IMR-90 (cell line): ENCODE measurements at regions of chr4 and their contacts with region 1.

Region 1: GRCh38 chr4:124712372-124713184 is at the start of gene ANKRD50:
- DNase-seq: peak; percentile 94
- ATAC-seq: peak; percentile 78
- H3K4me3 ChIP-seq: peak within 1 kb of the TSS; percentile 87
- H3K27ac ChIP-seq: peak within 1 kb of the TSS; percentile 90
- H3K4me1 ChIP-seq: peaks cover 4% of the 10 kb centered on the region
- H3K27me3 ChIP-seq: no peaks in the 10 kb centered on the region
- CTCF ChIP-seq: no peak
- POLR2A ChIP-seq: peak; percentile 97
- RAD21 ChIP-seq: 0 out of 2 replicates have a peak, but pooled peaks have one; percentile 7
- total RNA-seq, gene ANKRD50: 35.3 and 45.8 TPM in 2 replicates

Region 2: DNA sequence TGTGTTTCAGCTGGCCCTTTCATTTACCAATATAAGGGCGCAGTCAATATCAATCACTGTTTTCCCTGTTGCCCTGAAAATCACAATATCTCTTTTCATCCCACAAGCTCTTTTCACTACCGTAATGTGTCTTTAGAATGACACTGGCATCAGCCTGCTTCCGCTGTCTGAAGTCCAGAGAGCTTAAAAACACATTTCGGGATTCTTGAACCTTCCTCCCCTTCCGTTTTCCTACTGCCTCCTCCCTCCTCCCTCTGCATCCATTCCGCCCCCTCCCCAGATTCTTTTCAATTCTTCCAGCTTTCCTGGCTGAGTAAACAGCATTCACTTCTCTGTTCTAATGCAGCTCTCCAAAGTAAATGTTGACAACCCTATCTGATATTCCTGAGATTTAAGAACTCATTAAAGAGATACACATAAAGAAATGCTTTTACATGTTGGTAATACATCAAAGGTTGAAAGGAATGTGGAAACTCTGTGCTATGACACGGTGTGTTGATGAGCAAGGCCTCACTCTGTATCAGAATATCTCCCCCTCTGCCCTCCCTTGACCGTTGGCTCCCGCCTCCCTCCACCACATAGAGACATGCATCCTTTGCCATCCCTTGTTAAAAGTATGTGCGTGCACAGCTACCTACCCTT is 1399.5 kb before region 1 on chr4:
- CTCF ChIA-PET with region 1: no interaction called
- POLR2A ChIA-PET with region 1: no interaction called
- dilution Hi-C with region 1: no loop called
- in situ Hi-C with region 1: no loop called
- intact Hi-C with region 1: no loop called
- DNase-seq: no peak
- ATAC-seq: no peak
- H3K4me3 ChIP-seq: no peak overlapping the region
- H3K27ac ChIP-seq: no peak overlapping the region
- H3K4me1 ChIP-seq: no peaks in the 10 kb centered on the region
- H3K27me3 ChIP-seq: no peaks in the 10 kb centered on the region
- CTCF ChIP-seq: no peak
- POLR2A ChIP-seq: no peak
- RAD21 ChIP-seq: no peak

Region 3: GRCh38 chr4:124253080-124253479 is 459.5 kb before region 1 on chr4:
- CTCF ChIA-PET with region 1: no interaction called
- POLR2A ChIA-PET with region 1: no interaction called
- dilution Hi-C with region 1: no loop called
- in situ Hi-C with region 1: no loop called
- intact Hi-C with region 1: no loop called
- DNase-seq: no peak
- ATAC-seq: no peak
- H3K4me3 ChIP-seq: no peak overlapping the region
- H3K27ac ChIP-seq: no peak overlapping the region
- H3K4me1 ChIP-seq: no peaks in the 10 kb centered on the region
- H3K27me3 ChIP-seq: no peaks in the 10 kb centered on the region
- CTCF ChIP-seq: no peak
- POLR2A ChIP-seq: no peak
- RAD21 ChIP-seq: no peak

Region 4: GRCh38 chr4:124745985-124746801 is 33.6 kb after region 1 on chr4:
- CTCF ChIA-PET with region 1: no interaction called
- POLR2A ChIA-PET with region 1: no interaction called
- dilution Hi-C with region 1: no loop called
- in situ Hi-C with region 1: no loop called
- intact Hi-C with region 1: no loop called
- DNase-seq: peak; percentile 4
- ATAC-seq: no peak
- H3K4me3 ChIP-seq: no peak overlapping the region
- H3K27ac ChIP-seq: no peak overlapping the region
- H3K4me1 ChIP-seq: no peaks in the 10 kb centered on the region
- H3K27me3 ChIP-seq: no peaks in the 10 kb centered on the region
- CTCF ChIP-seq: no peak
- POLR2A ChIP-seq: no peak
- RAD21 ChIP-seq: no peak

Region 5: GRCh38 chr4:124940387-124940786 is 227.8 kb after region 1 on chr4:
- CTCF ChIA-PET with region 1: no interaction called
- POLR2A ChIA-PET with region 1: no interaction called
- dilution Hi-C with region 1: no loop called
- in situ Hi-C with region 1: no loop called
- intact Hi-C with region 1: loop called (anchors 5 kb)
- DNase-seq: peak; percentile 98
- ATAC-seq: peak; percentile 68
- H3K4me3 ChIP-seq: no peak overlapping the region
- H3K27ac ChIP-seq: no peak overlapping the region
- H3K4me1 ChIP-seq: peaks cover 3% of the 10 kb centered on the region
- H3K27me3 ChIP-seq: no peaks in the 10 kb centered on the region
- CTCF ChIP-seq: no peak
- POLR2A ChIP-seq: no peak
- RAD21 ChIP-seq: no peak

Region 6: DNA sequence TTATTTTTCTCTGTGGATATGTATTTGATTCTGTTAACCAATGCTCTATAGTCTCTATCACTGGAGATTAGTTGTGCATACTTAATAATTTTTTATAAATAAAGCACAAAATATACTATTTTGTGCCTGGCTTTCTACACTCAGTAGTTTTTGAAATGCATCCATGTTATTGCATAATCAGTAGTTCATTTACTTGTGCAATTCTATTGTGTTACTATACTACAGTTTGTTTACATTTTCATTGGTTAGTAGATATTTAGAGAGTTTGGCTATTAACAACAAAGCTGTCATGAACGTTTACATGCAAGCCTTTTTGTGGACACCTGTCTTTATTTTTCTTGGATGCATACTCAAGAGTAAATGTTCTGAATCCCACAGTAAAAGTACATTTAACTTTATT is 337.1 kb after region 1 on chr4:
- CTCF ChIA-PET with region 1: no interaction called
- POLR2A ChIA-PET with region 1: no interaction called
- dilution Hi-C with region 1: no loop called
- in situ Hi-C with region 1: no loop called
- intact Hi-C with region 1: loop called (anchors 5 kb)
- DNase-seq: peak; percentile 58
- ATAC-seq: no peak
- H3K4me3 ChIP-seq: no peak overlapping the region
- H3K27ac ChIP-seq: no peak overlapping the region
- H3K4me1 ChIP-seq: no peaks in the 10 kb centered on the region
- H3K27me3 ChIP-seq: no peaks in the 10 kb centered on the region
- CTCF ChIP-seq: no peak
- POLR2A ChIP-seq: no peak
- RAD21 ChIP-seq: no peak

Region 7: GRCh38 chr4:125244848-125245450 is 532.4 kb after region 1 on chr4:
- CTCF ChIA-PET with region 1: no interaction called
- POLR2A ChIA-PET with region 1: no interaction called
- dilution Hi-C with region 1: no loop called
- in situ Hi-C with region 1: no loop called
- intact Hi-C with region 1: loop called (anchors 1 kb)
- DNase-seq: peak; percentile 47
- ATAC-seq: peak; percentile 56; the same call in 1 of the 2 replicates
- H3K4me3 ChIP-seq: no peak overlapping the region
- H3K27ac ChIP-seq: no peak overlapping the region
- H3K4me1 ChIP-seq: peaks cover 3% of the 10 kb centered on the region
- H3K27me3 ChIP-seq: no peaks in the 10 kb centered on the region
- CTCF ChIP-seq: peak; percentile 54
- POLR2A ChIP-seq: no peak
- RAD21 ChIP-seq: peak; percentile 57

Region 8: GRCh38 chr4:125283707-125284279 is 571.2 kb after region 1 on chr4:
- CTCF ChIA-PET with region 1: no interaction called
- POLR2A ChIA-PET with region 1: no interaction called
- dilution Hi-C with region 1: no loop called
- in situ Hi-C with region 1: no loop called
- intact Hi-C with region 1: loop called (anchors 2 kb)
- DNase-seq: peak; percentile 51
- ATAC-seq: peak; percentile 42; the same call in 1 of the 2 replicates
- H3K4me3 ChIP-seq: no peak overlapping the region
- H3K27ac ChIP-seq: no peak overlapping the region
- H3K4me1 ChIP-seq: no peaks in the 10 kb centered on the region
- H3K27me3 ChIP-seq: no peaks in the 10 kb centered on the region
- CTCF ChIP-seq: peak; percentile 64
- POLR2A ChIP-seq: no peak
- RAD21 ChIP-seq: peak; percentile 75

Region 9: DNA sequence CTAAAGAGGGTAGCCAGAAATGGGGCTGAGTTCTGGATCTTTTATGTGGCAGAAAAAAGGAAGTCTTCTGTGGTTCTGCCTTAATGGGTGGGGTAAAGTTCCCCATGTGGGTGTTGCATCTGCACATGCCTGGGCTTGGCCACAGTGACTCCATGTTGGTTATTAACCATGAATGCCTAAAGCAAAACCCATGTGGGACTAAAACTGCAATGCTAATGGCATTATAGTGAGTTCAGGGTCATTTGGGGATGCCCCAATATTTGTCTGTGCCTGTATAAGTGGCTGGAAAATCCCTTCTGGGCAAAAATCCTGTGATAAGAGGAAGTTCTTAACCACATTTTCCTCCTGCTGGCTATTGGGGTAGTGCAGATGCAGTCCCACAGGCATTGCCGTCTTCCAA is 1459.5 kb after region 1 on chr4:
- CTCF ChIA-PET with region 1: no interaction called
- POLR2A ChIA-PET with region 1: no interaction called
- dilution Hi-C with region 1: no loop called
- in situ Hi-C with region 1: no loop called
- intact Hi-C with region 1: no loop called
- DNase-seq: no peak
- ATAC-seq: no peak
- H3K4me3 ChIP-seq: no peak overlapping the region
- H3K27ac ChIP-seq: no peak overlapping the region
- H3K4me1 ChIP-seq: no peaks in the 10 kb centered on the region
- H3K27me3 ChIP-seq: no peaks in the 10 kb centered on the region
- CTCF ChIP-seq: no peak
- POLR2A ChIP-seq: no peak
- RAD21 ChIP-seq: no peak